Mammary epithelial cell (primary cell): ENCODE measurements at regions of chr1 and their contacts with region 1.

Region 1: GRCh38 chr1:211258756-211259637 is at the start of gene RCOR3:
- DNase-seq: peak; percentile 90
- H3K4me3 ChIP-seq: peak within 1 kb of the TSS; percentile 97 to 99 (median 97)
- H3K27ac ChIP-seq: peak within 1 kb of the TSS; percentile 87
- H3K4me1 ChIP-seq: peaks cover 18% of the 10 kb centered on the region
- H3K27me3 ChIP-seq: no peaks in the 10 kb centered on the region
- CTCF ChIP-seq: peak; percentile 31 to 65
- total RNA-seq, gene RCOR3: 32.8 to 34.5 TPM

Region 2: DNA sequence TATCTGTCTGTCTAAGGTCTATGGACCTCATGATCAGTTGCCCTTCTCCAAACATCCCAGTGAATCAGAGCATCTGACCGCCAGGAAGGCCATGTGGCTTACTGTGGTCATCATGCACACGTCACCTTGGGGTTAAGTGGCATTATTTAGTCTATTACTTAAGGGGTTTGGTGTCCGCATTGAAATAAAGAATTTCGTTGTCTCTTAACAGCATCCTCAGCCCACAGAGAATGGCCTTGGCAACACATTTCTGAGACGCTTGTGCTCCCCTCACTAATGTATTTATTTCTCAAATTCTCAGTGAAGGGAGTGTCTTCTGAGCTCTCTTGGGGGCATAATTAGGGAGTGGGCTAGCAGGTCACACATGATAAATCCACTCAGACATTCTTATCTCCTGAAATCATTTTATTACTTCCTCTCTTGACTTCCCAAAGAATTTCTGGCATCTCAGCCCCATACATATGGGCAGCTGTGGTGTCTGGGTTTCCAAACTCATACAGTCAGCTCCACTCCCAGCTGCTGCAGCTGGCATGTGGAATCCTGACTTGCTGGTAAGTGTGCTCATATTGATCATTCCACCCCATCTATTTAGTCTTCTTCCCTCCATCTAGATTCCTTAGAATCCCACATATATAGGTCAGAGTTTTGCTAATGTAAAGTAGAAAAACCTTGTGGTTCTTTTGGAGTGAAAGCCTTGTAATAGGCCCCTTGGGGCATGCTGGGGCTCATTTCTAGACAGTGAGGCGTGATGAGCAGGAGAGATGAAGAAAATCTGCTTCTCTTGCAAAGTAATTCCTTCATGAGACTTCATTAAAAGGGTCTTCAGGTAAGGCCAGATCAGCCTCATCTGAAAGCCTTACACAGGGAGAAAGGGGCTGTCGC is 819.8 kb before region 1 on chr1:
- CTCF ChIA-PET with region 1: no interaction called
- dilution Hi-C with region 1: no loop called
- in situ Hi-C with region 1: no loop called
- intact Hi-C with region 1: loop called (anchors 10 kb)
- DNase-seq: peak; percentile 72
- H3K4me3 ChIP-seq: no peak overlapping the region
- H3K27ac ChIP-seq: peak overlapping the region; percentile 19
- H3K4me1 ChIP-seq: peaks cover 23% of the 10 kb centered on the region
- H3K27me3 ChIP-seq: no peaks in the 10 kb centered on the region
- CTCF ChIP-seq: no peak

Region 3: GRCh38 chr1:210989905-210990304 is 269.1 kb before region 1 on chr1:
- CTCF ChIA-PET with region 1: no interaction called
- dilution Hi-C with region 1: no loop called
- in situ Hi-C with region 1: no loop called
- intact Hi-C with region 1: no loop called
- DNase-seq: no peak
- H3K4me3 ChIP-seq: no peak overlapping the region
- H3K27ac ChIP-seq: no peak overlapping the region
- H3K4me1 ChIP-seq: no peaks in the 10 kb centered on the region
- H3K27me3 ChIP-seq: no peaks in the 10 kb centered on the region
- CTCF ChIP-seq: no peak

Region 4: GRCh38 chr1:211174375-211174774 is 84.6 kb before region 1 on chr1:
- CTCF ChIA-PET with region 1: no interaction called
- dilution Hi-C with region 1: no loop called
- in situ Hi-C with region 1: no loop called
- intact Hi-C with region 1: loop called (anchors 5 kb)
- DNase-seq: peak; percentile 78
- H3K4me3 ChIP-seq: no peak overlapping the region
- H3K27ac ChIP-seq: no peak overlapping the region
- H3K4me1 ChIP-seq: peaks cover 7% of the 10 kb centered on the region
- H3K27me3 ChIP-seq: no peaks in the 10 kb centered on the region
- CTCF ChIP-seq: no peak

Region 5: GRCh38 chr1:211345719-211346118 is 86.7 kb after region 1 on chr1:
- CTCF ChIA-PET with region 1: no interaction called
- dilution Hi-C with region 1: no loop called
- in situ Hi-C with region 1: no loop called
- intact Hi-C with region 1: no loop called
- DNase-seq: no peak
- H3K4me3 ChIP-seq: no peak overlapping the region
- H3K27ac ChIP-seq: no peak overlapping the region
- H3K4me1 ChIP-seq: no peaks in the 10 kb centered on the region
- H3K27me3 ChIP-seq: no peaks in the 10 kb centered on the region
- CTCF ChIP-seq: no peak

Region 6: GRCh38 chr1:212284744-212285684 is 1026.0 kb after region 1 on chr1 and contains the start of gene PPP2R5A:
- CTCF ChIA-PET with region 1: no interaction called
- dilution Hi-C with region 1: no loop called
- in situ Hi-C with region 1: no loop called
- intact Hi-C with region 1: loop called (anchors 5 kb)
- DNase-seq: peak; percentile 99
- H3K4me3 ChIP-seq: peak within 1 kb of the TSS; percentile 63 to 95 (median 92)
- H3K27ac ChIP-seq: peak within 1 kb of the TSS; percentile 92
- H3K4me1 ChIP-seq: peaks cover 22% of the 10 kb centered on the region
- H3K27me3 ChIP-seq: no peaks in the 10 kb centered on the region
- CTCF ChIP-seq: peak in 1 of 2 donors; percentile 28
- total RNA-seq, gene PPP2R5A: 17.3 to 19.0 TPM